A549 (cell line): ENCODE measurements at regions of chr15 and their contacts with region 1.

Region 1: DNA sequence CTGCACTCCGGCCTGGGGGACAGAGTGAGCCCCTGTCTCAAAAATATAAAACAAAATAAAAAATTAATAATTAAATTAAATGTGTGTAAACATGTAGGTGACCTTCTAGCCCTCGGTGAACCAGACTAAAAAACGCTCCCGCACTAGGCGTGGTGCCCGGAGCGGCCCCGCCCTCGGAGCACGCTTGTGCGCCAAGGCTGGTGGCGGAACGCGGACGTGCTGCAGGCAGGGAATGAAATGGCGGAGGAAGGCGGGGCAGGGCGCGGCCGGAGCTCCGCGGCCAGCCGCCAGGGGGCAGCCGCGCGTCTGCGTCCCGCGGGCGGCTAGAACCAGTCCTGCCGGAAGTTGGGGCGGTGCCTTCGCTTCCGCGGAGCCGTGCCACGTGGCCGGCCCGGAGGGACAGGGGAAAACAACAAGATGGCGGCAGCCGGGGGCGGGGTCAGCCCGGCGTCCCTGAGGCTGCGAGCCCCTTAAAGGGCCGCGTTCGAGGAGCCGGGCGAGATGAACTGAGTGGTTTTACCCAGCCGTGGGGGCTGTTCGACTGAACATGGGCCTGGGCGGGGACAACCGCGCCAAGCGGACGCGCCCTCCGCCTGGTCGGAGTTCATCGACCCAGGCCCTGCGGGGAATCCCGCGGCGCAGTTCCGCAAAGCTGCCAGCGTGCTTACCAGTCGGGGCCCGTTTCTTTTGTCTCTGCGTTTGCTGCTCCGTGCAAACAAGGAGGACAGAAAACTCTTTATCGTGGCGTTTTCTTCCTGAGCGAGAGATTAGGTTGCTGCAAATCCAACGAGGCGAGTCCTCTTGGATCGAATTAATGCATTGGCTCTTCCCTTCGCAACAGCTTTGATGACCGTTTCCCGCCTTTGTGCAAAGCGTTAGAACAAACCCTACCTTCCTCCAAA is 90.9 kb upstream of the CHD2 start:
- DNase-seq: peak; percentile 97 to 99
- ATAC-seq: peak; percentile 75 to 81
- H3K4me3 ChIP-seq: peak overlapping the region; percentile 41
- H3K27ac ChIP-seq: peak overlapping the region; percentile 95 to 97
- H3K4me1 ChIP-seq: peaks cover 37% of the 10 kb centered on the region
- CTCF ChIP-seq: peak; percentile 99
- EP300 ChIP-seq: peak in 1 of 2 experiments; percentile 28; a peak in 2 of 5 replicates
- POLR2A ChIP-seq: peak; percentile 81
- RAD21 ChIP-seq: peak; percentile 87 to 99; a peak in 4 of 5 replicates

Region 2: DNA sequence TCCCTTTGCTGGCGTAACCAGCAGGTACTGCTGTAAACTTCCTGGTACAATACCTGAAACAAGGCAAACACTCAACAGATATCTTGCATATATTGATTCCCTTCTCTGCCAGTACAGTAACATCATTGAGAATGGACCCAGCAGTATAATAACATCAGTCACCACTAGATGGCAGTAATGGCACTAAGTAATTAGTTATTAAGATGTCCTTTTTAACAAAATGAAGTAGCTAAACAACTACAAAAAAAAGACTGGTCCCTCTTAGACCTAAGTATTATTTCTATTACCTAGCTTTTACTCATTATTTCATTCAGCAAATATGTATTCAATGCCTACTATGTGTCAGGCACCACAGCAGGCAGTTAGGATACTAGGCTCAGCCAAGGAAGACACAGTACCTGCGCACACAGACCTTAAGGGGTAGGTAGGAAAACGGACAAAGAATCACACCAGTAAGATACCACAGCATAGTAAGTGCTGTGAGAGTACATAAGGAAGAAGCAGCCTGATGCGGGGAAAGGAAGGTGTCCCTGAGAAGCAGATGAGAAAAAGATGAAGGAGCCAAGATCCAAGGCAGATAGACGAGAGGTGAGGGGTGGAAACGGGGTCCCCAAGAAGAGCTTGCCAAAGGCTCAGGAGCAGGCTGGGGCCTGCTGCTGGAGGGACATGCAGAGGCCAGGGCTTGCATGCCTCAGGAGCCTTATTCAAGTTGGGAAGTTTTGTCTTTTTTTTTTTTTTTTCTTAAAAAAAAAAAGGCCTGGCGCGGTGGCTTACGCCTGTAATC is 11.9 kb before region 1 on chr15:
- CTCF ChIA-PET with region 1: interaction called, 46 read pairs
- POLR2A ChIA-PET with region 1: interaction called, 16 read pairs
- DNase-seq: peak; percentile 79 to 84
- ATAC-seq: peak; percentile 78 to 81
- H3K4me3 ChIP-seq: no peak overlapping the region
- H3K27ac ChIP-seq: peak overlapping the region; percentile 77 to 81
- H3K4me1 ChIP-seq: peaks cover 25% of the 10 kb centered on the region
- CTCF ChIP-seq: peak; percentile 96
- EP300 ChIP-seq: no peak
- POLR2A ChIP-seq: no peak
- RAD21 ChIP-seq: peak; percentile 88 to 91

Region 3: DNA sequence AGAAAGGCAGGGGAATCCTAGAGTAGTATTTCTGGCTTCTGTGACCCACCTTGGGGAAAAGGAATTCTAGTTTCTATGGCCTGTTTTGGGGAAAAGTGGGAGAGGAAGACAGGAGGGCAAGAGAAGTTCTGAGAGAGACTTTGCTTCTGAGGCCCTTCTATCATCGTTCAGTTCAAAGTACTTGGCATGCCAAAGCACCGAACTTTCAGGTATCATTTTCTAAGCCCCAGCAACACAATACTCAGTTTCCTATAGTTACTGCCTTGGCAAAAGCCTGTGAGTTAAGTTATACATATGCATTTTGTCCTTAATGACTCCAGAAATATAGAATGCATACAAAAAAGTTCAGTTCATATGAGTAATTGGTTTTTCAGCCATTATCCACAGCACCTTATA is 16.8 kb after region 1 on chr15:
- CTCF ChIA-PET with region 1: interaction called, 45 read pairs
- POLR2A ChIA-PET with region 1: interaction called, 60 read pairs
- DNase-seq: no peak
- ATAC-seq: no peak
- H3K4me3 ChIP-seq: no peak overlapping the region
- H3K27ac ChIP-seq: peak overlapping the region in 1 of 2 experiments; percentile 16; a peak in 2 of 6 replicates
- H3K4me1 ChIP-seq: peaks cover 33% of the 10 kb centered on the region
- CTCF ChIP-seq: no peak
- EP300 ChIP-seq: no peak
- POLR2A ChIP-seq: no peak
- RAD21 ChIP-seq: no peak

Region 4: DNA sequence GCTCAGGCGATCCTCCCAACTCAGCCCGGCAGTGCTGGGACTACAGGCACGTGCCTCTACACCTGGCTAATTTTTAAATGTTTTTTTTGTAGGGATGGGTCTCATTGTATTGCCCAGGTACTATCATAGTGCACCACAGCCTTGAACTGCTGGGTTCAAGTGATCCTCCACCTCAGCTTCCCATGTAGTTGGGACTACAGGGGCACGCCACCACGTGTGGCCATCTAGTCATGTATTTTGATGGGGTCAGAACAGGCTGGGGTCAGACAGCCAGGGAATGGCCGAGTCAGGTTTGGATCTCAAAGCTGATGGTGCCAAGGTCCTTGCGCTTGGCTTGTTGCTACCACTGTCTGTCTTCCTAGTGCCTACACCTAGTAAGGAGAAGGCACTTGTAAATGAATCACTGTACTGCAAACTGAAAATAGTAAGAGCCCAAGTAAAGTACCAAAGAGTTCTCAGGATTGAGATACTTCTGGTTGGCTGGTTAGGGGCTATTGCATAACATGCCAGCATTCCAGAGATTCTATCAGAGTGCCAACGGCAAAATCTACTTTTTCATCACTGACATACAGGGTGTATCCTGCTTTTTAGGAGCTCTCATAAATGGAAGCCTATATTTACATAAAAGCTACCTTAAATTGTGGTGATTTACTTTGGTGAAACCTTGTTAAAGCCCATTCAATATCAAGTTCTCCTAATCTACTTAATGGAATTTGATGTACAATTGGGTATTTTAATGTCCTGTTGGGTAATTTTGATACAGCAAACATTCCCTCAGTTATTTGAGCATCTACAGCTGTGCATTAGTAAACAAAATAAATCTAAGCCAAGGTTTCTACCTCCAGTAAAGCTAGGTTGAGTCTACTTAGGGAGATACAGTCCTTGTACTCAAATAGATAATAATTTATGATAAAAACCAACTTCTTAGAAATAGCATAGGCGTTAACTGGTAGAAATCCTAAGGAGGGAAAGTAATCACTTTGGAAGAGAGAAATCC is 60.1 kb after region 1 on chr15:
- CTCF ChIA-PET with region 1: interaction called, 168 read pairs
- POLR2A ChIA-PET with region 1: interaction called, 19 read pairs
- DNase-seq: peak in 1 of 2 experiments; percentile 84
- ATAC-seq: peak; percentile 82 to 84
- H3K4me3 ChIP-seq: peak overlapping the region; percentile 13; the same call in 1 of the 3 replicates
- H3K27ac ChIP-seq: peak overlapping the region; percentile 84 to 90
- H3K4me1 ChIP-seq: peaks cover 40% of the 10 kb centered on the region
- CTCF ChIP-seq: no peak
- EP300 ChIP-seq: peak in 1 of 2 experiments; percentile 66; a peak in 1 of 5 replicates
- POLR2A ChIP-seq: no peak
- RAD21 ChIP-seq: 0 out of 5 replicates have a peak, but pooled peaks of 1 of the 2 experiments have one; percentile 21

Region 5: DNA sequence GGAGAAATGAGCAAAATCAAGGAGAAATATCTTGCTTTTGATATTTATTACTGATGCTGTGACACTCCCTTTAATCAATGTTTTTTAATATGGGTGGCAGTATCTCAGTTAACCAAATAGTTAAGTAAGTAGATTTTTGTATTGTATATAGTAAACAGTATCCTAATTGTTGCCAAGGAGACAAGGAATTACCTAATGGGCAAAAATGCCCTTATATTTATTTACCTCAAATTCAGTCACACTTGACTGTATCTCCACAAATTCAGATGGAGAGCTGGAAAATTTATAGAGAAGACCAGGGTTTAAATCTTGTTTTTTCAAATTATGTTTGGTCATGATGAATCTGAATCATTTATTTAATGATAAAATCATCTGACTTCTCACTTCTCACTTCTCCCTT is 87.3 kb after region 1 on chr15:
- CTCF ChIA-PET with region 1: interaction called, 98 read pairs
- POLR2A ChIA-PET with region 1: interaction called, 278 read pairs
- DNase-seq: no peak
- ATAC-seq: no peak
- H3K4me3 ChIP-seq: no peak overlapping the region
- H3K27ac ChIP-seq: no peak overlapping the region
- H3K4me1 ChIP-seq: peaks cover 39% of the 10 kb centered on the region
- CTCF ChIP-seq: no peak
- EP300 ChIP-seq: no peak
- POLR2A ChIP-seq: no peak
- RAD21 ChIP-seq: no peak

Region 6: GRCh38 chr15:92917606-92918407 is 108.6 kb after region 1 on chr15:
- CTCF ChIA-PET with region 1: interaction called, 163 read pairs
- POLR2A ChIA-PET with region 1: interaction called, 80 read pairs
- DNase-seq: peak; percentile 86 to 97
- ATAC-seq: peak; percentile 55 to 59
- H3K4me3 ChIP-seq: peak overlapping the region; percentile 28
- H3K27ac ChIP-seq: peak overlapping the region; percentile 79 to 88
- H3K4me1 ChIP-seq: peaks cover 95% of the 10 kb centered on the region
- CTCF ChIP-seq: peak; percentile 98
- EP300 ChIP-seq: no peak
- POLR2A ChIP-seq: no peak
- RAD21 ChIP-seq: peak; percentile 94 to 98

Region 7: DNA sequence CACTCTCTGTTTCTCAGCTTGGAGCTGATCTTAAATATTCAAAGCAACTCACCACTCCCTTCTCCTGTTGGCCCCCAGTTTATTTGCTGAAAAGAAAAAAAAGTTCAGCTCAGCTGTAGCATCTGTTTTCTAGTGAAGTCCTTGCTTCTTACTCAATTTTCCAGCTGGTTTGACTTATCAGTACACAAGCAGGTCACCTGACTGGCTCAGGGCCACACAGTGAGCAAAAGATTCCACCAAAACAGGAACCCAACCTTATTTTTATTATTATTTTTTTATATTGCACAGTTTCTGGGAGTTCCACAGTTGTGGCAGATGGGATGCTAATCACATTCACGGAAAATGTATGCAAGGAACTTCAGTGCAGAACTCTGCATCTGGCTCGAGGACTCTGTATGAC is 670.5 kb after region 1 on chr15:
- CTCF ChIA-PET with region 1: no interaction called
- POLR2A ChIA-PET with region 1: no interaction called
- DNase-seq: no peak
- ATAC-seq: no peak
- H3K4me3 ChIP-seq: no peak overlapping the region
- H3K27ac ChIP-seq: no peak overlapping the region
- H3K4me1 ChIP-seq: no peaks in the 10 kb centered on the region
- CTCF ChIP-seq: no peak
- EP300 ChIP-seq: no peak
- POLR2A ChIP-seq: no peak
- RAD21 ChIP-seq: no peak